Endothelial cell of umbilical vein (primary cell): ENCODE measurements at regions of chr11 and their contacts with region 1.

Region 1: GRCh38 chr11:45917623-45918330 is at the start of gene PEX16:
- DNase-seq: peak; percentile 99
- H3K4me3 ChIP-seq: peak within 1 kb of the TSS; percentile 87 to 96 (median 94)
- H3K27ac ChIP-seq: peak within 1 kb of the TSS; percentile 79
- H3K4me1 ChIP-seq: peaks cover 10% of the 10 kb centered on the region
- H3K27me3 ChIP-seq: peaks cover 5 to 15% of the 10 kb centered on the region in 2 experiments
- CTCF ChIP-seq: no peak
- POLR2A ChIP-seq: peak; percentile 95
- total RNA-seq, gene PEX16: 25.7 and 27.4 TPM in 2 replicates

Region 2: DNA sequence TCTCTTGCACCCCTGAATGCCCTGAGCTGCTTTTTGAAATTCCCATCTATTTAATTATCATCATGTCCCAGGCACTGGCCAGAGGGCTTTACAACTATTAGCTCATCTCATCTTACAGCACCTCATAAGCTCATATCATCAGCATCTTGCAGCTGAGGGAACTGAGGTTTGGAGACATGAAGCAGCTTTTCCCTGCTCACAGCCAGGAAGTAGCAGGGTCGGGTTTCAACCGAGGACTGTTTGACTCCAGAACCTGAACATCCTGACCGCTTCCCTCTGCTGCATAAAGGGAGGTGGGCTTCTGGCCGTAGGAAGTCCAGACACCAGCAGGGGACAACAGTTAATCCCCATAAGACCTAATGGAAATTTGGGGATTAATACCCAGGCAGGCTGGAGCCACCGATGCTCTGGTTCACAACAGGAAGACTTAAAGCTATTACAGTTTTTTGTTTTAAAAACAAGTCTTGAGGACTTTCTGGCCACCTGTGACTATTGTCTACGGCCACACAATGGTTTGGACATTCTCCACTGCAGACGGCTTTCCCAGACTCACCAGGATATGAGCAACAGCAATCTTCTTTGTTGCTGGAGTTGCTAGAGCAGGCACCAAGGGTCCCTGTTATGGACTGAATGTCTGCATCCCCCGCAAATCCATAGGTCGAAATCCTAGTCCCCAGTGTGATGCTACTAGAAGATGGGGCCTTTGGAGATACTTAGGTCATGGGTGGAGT is 299.7 kb before region 1 on chr11:
- CTCF ChIA-PET with region 1: no interaction called
- POLR2A ChIA-PET with region 1: no interaction called
- dilution Hi-C with region 1: no loop called
- intact Hi-C with region 1: no loop called
- DNase-seq: peak; percentile 33
- H3K4me3 ChIP-seq: no peak overlapping the region
- H3K27ac ChIP-seq: peak overlapping the region; percentile 57
- H3K4me1 ChIP-seq: peaks cover 5% of the 10 kb centered on the region
- H3K27me3 ChIP-seq: no peaks in the 10 kb centered on the region
- CTCF ChIP-seq: no peak
- POLR2A ChIP-seq: no peak

Region 3: GRCh38 chr11:45846974-45847910 is 70.5 kb before region 1 on chr11 and contains the start of gene CRY2:
- CTCF ChIA-PET with region 1: no interaction called
- POLR2A ChIA-PET with region 1: interaction called, 4 read pairs
- dilution Hi-C with region 1: no loop called
- intact Hi-C with region 1: loop called (anchors 2 kb)
- DNase-seq: peak; percentile 98
- H3K4me3 ChIP-seq: peak within 1 kb of the TSS; percentile 39 to 81 (median 68)
- H3K27ac ChIP-seq: peak within 1 kb of the TSS; percentile 63
- H3K4me1 ChIP-seq: peaks cover 13% of the 10 kb centered on the region
- H3K27me3 ChIP-seq: peaks cover 7 to 12% of the 10 kb centered on the region in 2 experiments
- CTCF ChIP-seq: no peak
- POLR2A ChIP-seq: peak; percentile 81
- total RNA-seq, gene CRY2: 8.8 and 11.7 TPM in 2 replicates

Region 4: GRCh38 chr11:45872513-45873356 is 45.0 kb before region 1 on chr11:
- CTCF ChIA-PET with region 1: interaction called, 3 read pairs
- POLR2A ChIA-PET with region 1: no interaction called
- dilution Hi-C with region 1: no loop called
- intact Hi-C with region 1: loop called (anchors 1 kb)
- DNase-seq: peak; percentile 57
- H3K4me3 ChIP-seq: no peak overlapping the region
- H3K27ac ChIP-seq: no peak overlapping the region
- H3K4me1 ChIP-seq: no peaks in the 10 kb centered on the region
- H3K27me3 ChIP-seq: no peaks in the 10 kb centered on the region
- CTCF ChIP-seq: peak; percentile 70 to 84
- POLR2A ChIP-seq: no peak

Region 5: DNA sequence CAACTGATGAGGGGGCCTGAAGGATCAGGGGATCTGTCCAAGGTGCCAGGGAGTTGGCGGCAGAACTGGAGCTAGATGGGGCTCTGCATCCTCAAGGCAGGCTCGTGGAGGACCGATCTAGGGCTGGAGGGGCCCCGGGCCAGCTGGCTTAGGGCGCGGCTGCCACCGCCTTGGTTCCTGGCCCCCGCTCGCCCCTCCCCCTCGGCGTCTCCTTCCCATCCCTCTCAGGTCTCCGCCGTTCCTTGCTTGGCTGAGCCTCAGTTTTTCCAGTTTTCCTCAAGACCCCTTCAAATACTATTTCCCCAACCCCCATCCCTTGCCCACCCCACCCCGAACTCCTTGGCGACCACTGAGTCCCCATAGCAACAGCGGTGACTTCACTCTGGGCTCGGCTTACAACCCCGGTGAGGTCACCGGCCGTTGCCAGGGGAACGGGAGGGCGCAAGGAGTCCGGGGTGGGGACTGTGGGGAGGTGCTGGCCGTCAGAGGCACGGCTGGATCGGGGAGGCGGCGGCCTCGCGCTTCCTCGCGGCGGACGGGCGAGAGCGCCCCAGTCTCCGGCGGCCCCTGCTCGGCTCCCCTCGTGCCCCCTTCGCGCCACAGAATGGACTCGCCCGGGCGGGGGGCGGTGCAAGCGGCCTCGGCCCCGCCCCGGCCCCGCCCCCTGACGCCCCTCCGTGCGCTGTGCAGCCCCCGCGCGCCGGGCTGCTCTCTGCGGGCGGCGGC is 18.2 kb before region 1 on chr11:
- CTCF ChIA-PET with region 1: no interaction called
- POLR2A ChIA-PET with region 1: interaction called, 4 read pairs
- dilution Hi-C with region 1: no loop called
- intact Hi-C with region 1: loop called (anchors 1 kb)
- DNase-seq: peak; percentile 70
- H3K4me3 ChIP-seq: peak overlapping the region; percentile 11 to 40 (median 26)
- H3K27ac ChIP-seq: peak overlapping the region; percentile 70
- H3K4me1 ChIP-seq: peaks cover 10% of the 10 kb centered on the region
- H3K27me3 ChIP-seq: peaks cover 4 to 9% of the 10 kb centered on the region in 2 experiments
- CTCF ChIP-seq: no peak
- POLR2A ChIP-seq: no peak

Region 6: DNA sequence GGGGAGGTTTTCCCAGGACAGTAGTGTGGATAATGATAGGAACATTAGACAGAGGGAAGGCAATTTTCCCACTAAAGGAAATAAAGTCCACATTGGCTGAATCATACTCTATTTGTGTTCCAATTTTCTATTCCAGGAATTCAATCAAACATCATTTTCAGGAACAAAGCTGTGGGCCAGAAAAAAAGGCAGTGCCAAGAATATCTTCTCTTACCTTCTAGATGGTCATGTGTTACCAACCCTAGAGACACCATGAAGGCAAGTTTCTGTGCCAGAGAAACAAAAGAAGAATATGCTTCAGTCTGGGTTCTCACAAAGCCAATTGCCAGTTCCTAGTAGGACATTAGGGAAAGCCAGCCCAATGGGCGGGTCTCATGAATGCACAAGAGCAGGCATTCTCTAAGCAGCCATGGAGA is 32.2 kb after region 1 on chr11:
- CTCF ChIA-PET with region 1: no interaction called
- POLR2A ChIA-PET with region 1: no interaction called
- dilution Hi-C with region 1: no loop called
- intact Hi-C with region 1: no loop called
- DNase-seq: no peak
- H3K4me3 ChIP-seq: no peak overlapping the region
- H3K27ac ChIP-seq: no peak overlapping the region
- H3K4me1 ChIP-seq: no peaks in the 10 kb centered on the region
- H3K27me3 ChIP-seq: no peaks in the 10 kb centered on the region
- CTCF ChIP-seq: no peak
- POLR2A ChIP-seq: no peak